ENCODE measurements at regions of chr20 and their contacts with region 1.

Region 1: DNA sequence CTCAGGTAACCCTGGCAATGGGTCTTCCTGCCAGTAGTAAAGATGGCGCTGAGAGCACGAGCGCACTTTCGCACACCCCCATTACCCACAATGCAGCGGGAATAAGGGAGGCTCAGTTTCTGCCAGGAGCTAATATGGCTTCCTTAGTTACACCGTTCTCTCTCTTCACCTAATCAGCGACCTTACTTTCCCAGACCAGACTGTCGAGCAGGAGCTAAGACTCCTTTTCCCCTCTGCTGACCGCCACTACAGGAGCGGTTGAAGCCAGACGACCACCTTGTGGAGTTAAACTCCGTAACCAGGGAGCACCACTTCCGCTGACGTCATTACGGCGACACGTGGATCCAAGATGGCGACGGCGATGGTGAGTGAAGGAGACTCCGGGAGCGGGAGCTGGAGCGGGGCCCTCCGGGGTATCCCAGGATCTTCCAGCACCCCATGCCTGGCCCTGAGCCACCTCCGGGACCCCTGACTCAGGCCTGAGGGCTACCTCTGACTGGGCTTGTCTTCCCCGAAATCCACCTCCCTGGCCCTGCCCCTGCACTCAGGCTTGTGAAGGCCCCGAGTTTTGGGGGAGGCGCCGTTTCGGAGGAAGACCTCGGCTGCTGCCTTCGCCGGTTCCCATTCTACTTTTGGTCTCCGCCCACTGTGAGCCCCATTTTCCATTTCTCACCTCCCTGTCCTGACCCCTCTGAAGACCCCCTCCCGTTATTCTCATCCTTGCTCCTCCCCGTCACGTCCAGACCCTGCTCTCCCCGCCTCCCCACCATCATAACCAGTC is at the start of gene TM9SF4:
- DNase-seq: peak; percentile 99
- ATAC-seq: peak; percentile 93
- H3K4me3 ChIP-seq: peak within 1 kb of the TSS; percentile 72 to 86
- H3K27ac ChIP-seq: peak within 1 kb of the TSS; percentile 98
- H3K4me1 ChIP-seq: peaks cover 18% of the 10 kb centered on the region
- H3K27me3 ChIP-seq: peaks cover 3% of the 10 kb centered on the region; the same call in 1 of the 2 replicates
- CTCF ChIP-seq: no peak
- total RNA-seq, gene TM9SF4: 180 TPM

Region 2: GRCh38 chr20:31908016-31908415 is 201.6 kb before region 1 on chr20:
- CTCF ChIA-PET with region 1: no interaction called
- POLR2A ChIA-PET with region 1: no interaction called
- in situ Hi-C with region 1: no loop called
- intact Hi-C with region 1: no loop called
- DNase-seq: no peak
- ATAC-seq: no peak
- H3K4me3 ChIP-seq: no peak overlapping the region
- H3K27ac ChIP-seq: no peak overlapping the region
- H3K4me1 ChIP-seq: no peaks in the 10 kb centered on the region
- H3K27me3 ChIP-seq: no peaks in the 10 kb centered on the region
- CTCF ChIP-seq: no peak

Region 3: DNA sequence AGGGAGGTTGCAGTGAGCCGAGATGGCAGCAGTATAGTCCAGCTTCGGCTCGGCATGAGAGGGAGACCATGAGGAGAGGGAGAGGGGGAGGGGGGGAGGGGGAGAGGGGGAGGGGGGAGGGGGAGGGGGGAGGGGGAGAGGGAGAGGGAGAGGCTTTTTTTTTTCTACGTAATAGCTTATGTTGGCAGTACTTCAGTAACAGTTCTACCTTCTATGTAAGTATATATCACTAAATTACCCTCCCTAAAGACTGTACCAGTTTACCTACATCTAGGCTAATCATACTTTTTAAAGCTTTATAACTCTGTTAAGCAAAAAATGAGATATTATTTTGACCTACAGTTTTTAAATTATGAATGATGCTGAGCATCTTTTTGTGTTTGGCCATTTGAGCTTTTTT is 13.5 kb after region 1 on chr20:
- CTCF ChIA-PET with region 1: no interaction called
- POLR2A ChIA-PET with region 1: interaction called, 13 read pairs
- in situ Hi-C with region 1: no loop called
- intact Hi-C with region 1: no loop called
- DNase-seq: no peak
- ATAC-seq: no peak
- H3K4me3 ChIP-seq: no peak overlapping the region
- H3K27ac ChIP-seq: no peak overlapping the region
- H3K4me1 ChIP-seq: no peaks in the 10 kb centered on the region
- H3K27me3 ChIP-seq: no peaks in the 10 kb centered on the region
- CTCF ChIP-seq: no peak

Region 4: GRCh38 chr20:32456869-32457478 is 347.4 kb after region 1 on chr20:
- CTCF ChIA-PET with region 1: no interaction called
- POLR2A ChIA-PET with region 1: no interaction called
- in situ Hi-C with region 1: no loop called
- intact Hi-C with region 1: no loop called
- DNase-seq: no peak
- ATAC-seq: peak; percentile 50
- H3K4me3 ChIP-seq: peak overlapping the region; percentile 26 to 42
- H3K27ac ChIP-seq: no peak overlapping the region
- H3K4me1 ChIP-seq: peaks cover 13% of the 10 kb centered on the region
- H3K27me3 ChIP-seq: no peaks in the 10 kb centered on the region
- CTCF ChIP-seq: peak; percentile 94; the same call in 1 of the 2 replicates

Region 5: GRCh38 chr20:32626859-32627636 is 517.5 kb after region 1 on chr20:
- CTCF ChIA-PET with region 1: interaction called, 17 read pairs
- POLR2A ChIA-PET with region 1: no interaction called
- in situ Hi-C with region 1: no loop called
- intact Hi-C with region 1: no loop called
- DNase-seq: no peak
- ATAC-seq: no peak
- H3K4me3 ChIP-seq: no peak overlapping the region
- H3K27ac ChIP-seq: 0 out of 2 replicates have a peak overlapping the region, but pooled peaks have one; percentile 44
- H3K4me1 ChIP-seq: peaks cover 8% of the 10 kb centered on the region
- H3K27me3 ChIP-seq: no peaks in the 10 kb centered on the region
- CTCF ChIP-seq: no peak

Region 6: GRCh38 chr20:33803921-33804337 is 1694.3 kb after region 1 on chr20:
- CTCF ChIA-PET with region 1: no interaction called
- POLR2A ChIA-PET with region 1: no interaction called
- in situ Hi-C with region 1: no loop called
- intact Hi-C with region 1: no loop called
- DNase-seq: no peak
- ATAC-seq: peak; percentile 65; the same call in 1 of the 2 replicates
- H3K4me3 ChIP-seq: no peak overlapping the region
- H3K27ac ChIP-seq: no peak overlapping the region
- H3K4me1 ChIP-seq: no peaks in the 10 kb centered on the region
- H3K27me3 ChIP-seq: no peaks in the 10 kb centered on the region
- CTCF ChIP-seq: no peak